A549 (cell line): ENCODE measurements at regions of chr17 and their contacts with region 1.

Region 1: DNA sequence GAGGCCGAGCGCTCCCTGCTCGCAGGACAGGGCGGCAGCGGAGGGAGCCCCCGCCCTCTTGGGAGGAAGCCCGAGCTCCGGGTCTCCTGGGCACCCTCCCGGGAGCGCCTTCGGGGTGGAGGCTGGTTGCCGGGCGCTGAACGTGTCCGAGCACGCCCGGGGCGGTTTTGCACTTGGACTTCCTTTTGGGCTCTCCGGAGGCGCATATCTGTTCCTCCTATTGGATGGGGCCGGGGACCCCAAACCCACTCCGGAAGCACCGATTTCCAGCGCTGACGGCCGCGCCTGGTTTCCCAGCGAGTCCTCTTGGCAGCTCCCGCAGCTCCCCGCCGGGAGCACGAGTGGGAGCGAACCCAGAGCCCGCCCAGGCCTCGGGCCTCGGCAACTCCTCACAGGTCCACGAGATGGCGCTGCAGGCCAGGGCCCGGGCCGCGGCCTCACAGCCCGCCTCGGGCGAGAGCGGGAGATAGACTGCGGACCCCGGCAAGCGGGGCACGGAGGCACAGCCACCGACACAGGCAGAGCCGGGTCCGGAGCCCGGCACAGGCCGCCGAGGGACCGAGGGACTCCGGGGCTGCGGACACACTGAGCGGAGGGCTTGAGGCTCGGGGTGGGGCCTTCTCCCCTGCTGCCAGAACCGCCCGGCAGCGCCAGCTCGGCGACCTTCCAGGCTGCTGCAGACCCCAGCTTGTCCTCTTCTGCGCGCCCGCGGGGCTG is 12.7 kb downstream of the TBX2 start:
- DNase-seq: peak; percentile 82 to 90
- ATAC-seq: peak; percentile 55 to 80
- H3K4me3 ChIP-seq: peak overlapping the region; percentile 58
- H3K27ac ChIP-seq: peak overlapping the region; percentile 85 to 91
- H3K4me1 ChIP-seq: peaks cover 15% of the 10 kb centered on the region
- CTCF ChIP-seq: peak; percentile 99
- EP300 ChIP-seq: no peak
- POLR2A ChIP-seq: peak; percentile 47
- RAD21 ChIP-seq: peak; percentile 98 to 100

Region 2: GRCh38 chr17:61002316-61002736 is 410.0 kb before region 1 on chr17:
- CTCF ChIA-PET with region 1: interaction called, 16 read pairs
- POLR2A ChIA-PET with region 1: no interaction called
- DNase-seq: peak; percentile 7 to 63
- ATAC-seq: peak in 1 of 2 experiments; percentile 64; a peak in 3 of 6 replicates
- H3K4me3 ChIP-seq: no peak overlapping the region
- H3K27ac ChIP-seq: no peak overlapping the region
- H3K4me1 ChIP-seq: peaks cover 7% of the 10 kb centered on the region; the same call in 2 of the 3 replicates
- CTCF ChIP-seq: peak; percentile 91
- EP300 ChIP-seq: no peak
- POLR2A ChIP-seq: no peak
- RAD21 ChIP-seq: peak; percentile 91 to 95

Region 3: GRCh38 chr17:61230461-61230860 is 181.8 kb before region 1 on chr17:
- CTCF ChIA-PET with region 1: no interaction called
- POLR2A ChIA-PET with region 1: no interaction called
- DNase-seq: no peak
- ATAC-seq: no peak
- H3K4me3 ChIP-seq: no peak overlapping the region
- H3K27ac ChIP-seq: no peak overlapping the region
- H3K4me1 ChIP-seq: peaks cover 3% of the 10 kb centered on the region; the same call in 2 of the 3 replicates
- CTCF ChIP-seq: no peak
- EP300 ChIP-seq: no peak
- POLR2A ChIP-seq: no peak
- RAD21 ChIP-seq: no peak

Region 4: DNA sequence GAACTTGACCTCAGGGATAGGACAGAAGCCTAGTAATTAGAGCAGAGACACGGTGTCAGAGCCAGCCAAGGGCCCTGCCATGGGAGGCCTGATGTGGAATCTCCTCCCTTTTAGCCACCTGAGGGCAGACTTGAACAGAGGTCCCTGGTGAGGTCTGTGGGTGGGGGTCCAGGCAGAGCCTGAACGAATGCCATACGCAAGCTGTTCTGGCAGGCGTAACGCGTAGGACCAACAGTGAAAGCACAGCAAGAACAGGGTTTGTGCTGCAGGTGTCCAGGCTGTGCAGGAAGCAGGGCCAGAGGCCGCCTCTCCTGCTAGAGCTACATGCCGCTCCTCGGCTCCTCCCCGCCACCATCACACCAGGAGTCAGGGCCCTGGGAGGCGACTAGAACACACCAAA is 94.5 kb before region 1 on chr17:
- CTCF ChIA-PET with region 1: no interaction called
- POLR2A ChIA-PET with region 1: no interaction called
- DNase-seq: no peak
- ATAC-seq: peak in 1 of 2 experiments; percentile 45; a peak in 2 of 6 replicates
- H3K4me3 ChIP-seq: no peak overlapping the region
- H3K27ac ChIP-seq: no peak overlapping the region
- H3K4me1 ChIP-seq: no peaks in the 10 kb centered on the region
- CTCF ChIP-seq: no peak
- EP300 ChIP-seq: no peak
- POLR2A ChIP-seq: no peak
- RAD21 ChIP-seq: 0 out of 5 replicates have a peak, but pooled peaks of 1 of the 2 experiments have one; percentile 13

Region 5: DNA sequence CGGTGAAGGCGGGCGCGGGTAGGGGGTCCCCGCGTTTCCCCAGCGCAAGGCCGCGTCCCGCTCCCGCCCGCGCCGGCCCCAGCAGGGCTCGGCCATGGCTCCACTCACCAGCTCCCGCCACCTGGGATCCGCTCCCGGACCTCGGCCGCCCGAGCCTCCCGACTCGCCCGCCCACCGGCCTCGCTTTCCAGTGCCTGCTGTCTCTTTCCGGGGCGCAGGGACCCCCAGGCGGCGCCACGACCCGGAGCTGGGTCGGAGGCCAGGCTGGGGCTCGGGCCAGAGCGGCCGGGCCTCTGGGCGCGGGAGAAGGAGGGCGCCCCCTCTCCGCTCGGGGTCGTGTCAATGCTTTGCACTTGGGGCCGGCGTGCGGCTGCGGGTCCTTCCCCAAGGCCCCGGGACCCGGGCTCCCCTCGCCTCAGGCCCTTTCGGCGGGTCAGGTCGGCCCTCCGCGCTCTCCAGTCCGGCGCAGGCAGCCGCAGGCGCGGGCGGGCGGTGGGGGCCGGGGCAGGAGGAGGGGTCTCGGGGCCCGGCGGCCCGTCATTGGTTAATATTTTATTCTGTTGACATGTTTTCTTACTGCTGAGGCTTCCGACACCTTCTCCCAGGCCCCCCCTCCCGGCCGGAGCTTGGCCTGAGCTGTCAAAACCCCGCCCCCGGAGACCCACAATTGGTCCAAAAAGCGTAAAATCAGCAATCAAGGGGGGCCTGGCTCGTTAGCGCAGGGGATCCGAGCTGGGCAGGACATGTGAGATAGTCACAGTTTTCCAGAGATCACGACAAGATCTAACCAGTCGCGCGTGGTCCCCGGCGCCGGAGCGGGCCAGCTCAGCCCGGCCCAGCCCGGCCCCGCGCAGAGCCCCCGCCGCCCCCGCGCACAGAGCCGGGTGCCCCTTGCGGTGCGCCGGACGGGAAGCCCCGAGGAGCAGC is 12.9 kb before region 1 on chr17 and contains the start of gene TBX2:
- CTCF ChIA-PET with region 1: interaction called, 67 read pairs
- POLR2A ChIA-PET with region 1: interaction called, 4 read pairs
- DNase-seq: peak; percentile 92 to 97
- ATAC-seq: peak; percentile 65 to 88
- H3K4me3 ChIP-seq: peak within 1 kb of the TSS; percentile 84
- H3K27ac ChIP-seq: peak within 1 kb of the TSS; percentile 84 to 89
- H3K4me1 ChIP-seq: peaks cover 10% of the 10 kb centered on the region; the same call in 2 of the 3 replicates
- CTCF ChIP-seq: peak; percentile 43
- EP300 ChIP-seq: no peak
- POLR2A ChIP-seq: peak; percentile 43
- RAD21 ChIP-seq: peak in 1 of 2 experiments; percentile 28; a peak in 3 of 5 replicates
- polyA plus RNA-seq, gene TBX2: 0.69 and 0.71 TPM in 2 replicates

Region 6: GRCh38 chr17:61543786-61544415 is 131.6 kb after region 1 on chr17:
- CTCF ChIA-PET with region 1: interaction called, 116 read pairs
- POLR2A ChIA-PET with region 1: no interaction called
- DNase-seq: no peak
- ATAC-seq: no peak
- H3K4me3 ChIP-seq: no peak overlapping the region
- H3K27ac ChIP-seq: no peak overlapping the region
- H3K4me1 ChIP-seq: no peaks in the 10 kb centered on the region
- CTCF ChIP-seq: no peak
- EP300 ChIP-seq: no peak
- POLR2A ChIP-seq: no peak
- RAD21 ChIP-seq: no peak

Region 7: GRCh38 chr17:61568219-61569072 is 156.1 kb after region 1 on chr17:
- CTCF ChIA-PET with region 1: interaction called, 357 read pairs
- POLR2A ChIA-PET with region 1: interaction called, 8 read pairs
- DNase-seq: peak; percentile 94 to 97
- ATAC-seq: peak; percentile 96 to 97
- H3K4me3 ChIP-seq: peak overlapping the region; percentile 12; the same call in 1 of the 3 replicates
- H3K27ac ChIP-seq: peak overlapping the region; percentile 87 to 88
- H3K4me1 ChIP-seq: peaks cover 33% of the 10 kb centered on the region
- CTCF ChIP-seq: no peak
- EP300 ChIP-seq: peak; percentile 90 to 94
- POLR2A ChIP-seq: no peak
- RAD21 ChIP-seq: peak in 1 of 2 experiments; percentile 22; a peak in 2 of 5 replicates

Region 8: GRCh38 chr17:61594294-61594825 is 182.1 kb after region 1 on chr17:
- CTCF ChIA-PET with region 1: interaction called, 138 read pairs
- POLR2A ChIA-PET with region 1: no interaction called
- DNase-seq: no peak
- ATAC-seq: no peak
- H3K4me3 ChIP-seq: no peak overlapping the region
- H3K27ac ChIP-seq: no peak overlapping the region
- H3K4me1 ChIP-seq: no peaks in the 10 kb centered on the region
- CTCF ChIP-seq: no peak
- EP300 ChIP-seq: no peak
- POLR2A ChIP-seq: no peak
- RAD21 ChIP-seq: no peak